WTC11 (cell line): ENCODE measurements at regions of chr5 and their contacts with region 1.

Region 1: DNA sequence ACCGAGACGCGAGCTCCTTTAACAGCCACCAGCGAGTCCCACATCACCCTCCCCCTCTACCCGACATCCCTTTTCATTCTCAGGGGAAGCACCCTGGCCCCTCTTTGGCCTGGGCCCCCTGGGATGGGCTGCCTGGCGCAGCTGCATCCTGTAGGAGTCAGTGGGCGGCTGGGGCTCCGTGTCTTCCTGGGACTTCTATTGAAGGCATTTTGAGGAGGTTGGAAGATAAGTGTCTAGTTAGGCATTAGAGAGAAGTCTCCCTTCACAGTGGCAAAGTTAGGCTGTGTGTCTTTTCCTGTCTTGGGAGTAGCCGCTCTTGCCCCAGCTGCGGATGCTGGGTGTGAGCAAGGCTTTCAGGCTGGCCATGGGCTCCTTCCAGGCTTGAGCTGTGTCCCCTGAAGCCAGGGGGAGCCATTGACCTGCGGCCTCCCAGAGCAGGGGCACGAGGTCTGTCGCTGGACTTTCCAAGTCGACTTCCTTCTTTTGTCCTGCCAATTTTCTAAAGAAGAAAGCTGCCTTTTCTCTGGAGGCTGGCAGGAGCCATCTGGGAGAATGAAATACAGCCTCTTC is 18.6 kb upstream of the NKD2 start:
- DNase-seq: peak; percentile 62
- ATAC-seq: peak; percentile 88
- H3K4me3 Mint-ChIP-seq: no peak overlapping the region
- H3K27ac Mint-ChIP-seq: no peak overlapping the region
- H3K4me1 Mint-ChIP-seq: peaks cover 5% of the 10 kb centered on the region
- H3K27me3 Mint-ChIP-seq: peaks cover 6% of the 10 kb centered on the region
- CTCF ChIP-seq: no peak

Region 2: DNA sequence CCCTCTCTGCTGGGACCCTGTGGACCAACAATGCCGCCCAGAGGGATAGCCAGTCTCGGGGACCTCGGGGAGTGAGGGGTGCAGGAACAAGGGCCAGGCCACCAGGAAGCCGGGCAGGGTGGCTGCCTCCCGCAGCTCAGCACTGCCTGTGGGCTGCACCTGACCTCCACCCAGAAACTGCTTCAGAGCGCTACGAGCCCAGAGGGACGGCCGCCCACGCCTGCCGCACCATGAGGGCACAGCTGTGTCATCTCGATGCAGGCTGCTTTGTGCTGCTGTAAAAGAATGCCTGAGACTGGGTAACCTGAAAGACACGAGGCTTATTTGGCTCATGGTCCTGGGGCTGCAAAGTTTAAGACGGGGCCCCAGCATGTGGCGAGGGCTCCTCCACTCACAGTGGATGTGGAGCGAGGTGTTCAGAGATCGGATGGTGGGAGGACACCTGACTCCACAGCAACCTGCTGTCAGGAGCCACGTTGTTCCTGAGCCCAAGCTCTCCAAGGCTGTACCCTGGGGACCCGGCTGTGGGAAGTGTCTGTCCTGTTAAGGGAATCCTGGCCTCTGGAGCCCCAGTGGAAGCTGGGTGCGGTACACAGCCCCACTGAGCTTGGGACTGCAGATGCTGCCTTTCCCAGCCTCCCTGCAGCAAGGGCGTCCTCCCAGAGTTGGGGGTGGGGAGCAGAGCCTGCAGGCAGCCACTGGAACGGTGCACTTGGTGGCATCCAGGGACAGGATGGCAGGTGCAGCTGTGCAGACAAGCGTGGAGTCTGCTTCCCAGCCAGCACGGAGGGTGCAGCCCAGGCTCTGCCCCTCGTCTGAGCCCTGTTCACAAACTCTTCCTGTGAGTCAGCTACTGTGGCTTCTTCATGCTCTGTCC is 127.4 kb before region 1 on chr5:
- CTCF ChIA-PET with region 1: no interaction called
- POLR2A ChIA-PET with region 1: no interaction called
- DNase-seq: no peak
- ATAC-seq: no peak
- H3K4me3 Mint-ChIP-seq: no peak overlapping the region
- H3K27ac Mint-ChIP-seq: no peak overlapping the region
- H3K4me1 Mint-ChIP-seq: no peaks in the 10 kb centered on the region
- H3K27me3 Mint-ChIP-seq: no peaks in the 10 kb centered on the region
- CTCF ChIP-seq: no peak

Region 3: DNA sequence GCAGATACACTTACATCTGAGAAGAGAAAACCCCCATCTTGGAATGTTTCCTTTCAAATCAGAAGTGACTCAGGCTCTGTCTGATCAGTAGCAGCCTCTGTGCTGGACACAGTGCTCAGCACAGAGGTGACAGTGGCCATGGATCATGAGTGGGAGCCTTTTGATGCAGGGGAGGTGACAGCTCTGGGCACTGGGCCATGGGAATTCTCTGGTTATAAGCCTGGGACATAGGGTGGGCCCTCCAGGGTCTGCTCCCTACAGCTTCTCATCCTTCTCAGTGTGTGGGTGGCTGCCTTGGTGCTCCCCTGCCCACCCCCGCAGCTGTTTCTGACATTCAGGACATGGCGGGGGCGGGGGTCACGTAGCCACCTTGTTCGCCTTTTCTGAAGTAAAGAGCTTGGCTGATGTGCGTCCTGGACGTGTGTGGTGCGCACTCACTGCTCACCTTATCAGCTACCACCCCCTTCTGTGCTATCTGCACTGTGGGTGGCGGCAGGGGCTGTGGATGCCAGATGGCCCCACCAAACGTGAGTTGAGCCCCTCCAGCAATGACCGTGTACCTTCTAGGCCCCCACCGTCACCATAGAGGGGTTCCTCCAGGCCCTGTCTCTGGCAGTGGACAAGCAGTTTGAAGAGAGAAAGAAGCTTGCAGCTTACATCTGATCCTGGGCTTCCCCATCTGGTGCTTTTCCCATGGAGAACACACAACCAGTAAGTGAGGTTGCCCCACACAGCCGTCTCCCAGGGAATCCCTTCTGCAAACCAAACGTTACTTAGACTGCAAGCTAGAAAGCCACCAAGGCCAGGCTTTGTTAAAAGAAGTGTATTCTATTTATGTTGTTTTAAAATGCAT is 73.4 kb before region 1 on chr5:
- CTCF ChIA-PET with region 1: no interaction called
- POLR2A ChIA-PET with region 1: no interaction called
- DNase-seq: no peak
- ATAC-seq: no peak
- H3K4me3 Mint-ChIP-seq: no peak overlapping the region
- H3K27ac Mint-ChIP-seq: no peak overlapping the region
- H3K4me1 Mint-ChIP-seq: no peaks in the 10 kb centered on the region
- H3K27me3 Mint-ChIP-seq: no peaks in the 10 kb centered on the region
- CTCF ChIP-seq: no peak

Region 4: DNA sequence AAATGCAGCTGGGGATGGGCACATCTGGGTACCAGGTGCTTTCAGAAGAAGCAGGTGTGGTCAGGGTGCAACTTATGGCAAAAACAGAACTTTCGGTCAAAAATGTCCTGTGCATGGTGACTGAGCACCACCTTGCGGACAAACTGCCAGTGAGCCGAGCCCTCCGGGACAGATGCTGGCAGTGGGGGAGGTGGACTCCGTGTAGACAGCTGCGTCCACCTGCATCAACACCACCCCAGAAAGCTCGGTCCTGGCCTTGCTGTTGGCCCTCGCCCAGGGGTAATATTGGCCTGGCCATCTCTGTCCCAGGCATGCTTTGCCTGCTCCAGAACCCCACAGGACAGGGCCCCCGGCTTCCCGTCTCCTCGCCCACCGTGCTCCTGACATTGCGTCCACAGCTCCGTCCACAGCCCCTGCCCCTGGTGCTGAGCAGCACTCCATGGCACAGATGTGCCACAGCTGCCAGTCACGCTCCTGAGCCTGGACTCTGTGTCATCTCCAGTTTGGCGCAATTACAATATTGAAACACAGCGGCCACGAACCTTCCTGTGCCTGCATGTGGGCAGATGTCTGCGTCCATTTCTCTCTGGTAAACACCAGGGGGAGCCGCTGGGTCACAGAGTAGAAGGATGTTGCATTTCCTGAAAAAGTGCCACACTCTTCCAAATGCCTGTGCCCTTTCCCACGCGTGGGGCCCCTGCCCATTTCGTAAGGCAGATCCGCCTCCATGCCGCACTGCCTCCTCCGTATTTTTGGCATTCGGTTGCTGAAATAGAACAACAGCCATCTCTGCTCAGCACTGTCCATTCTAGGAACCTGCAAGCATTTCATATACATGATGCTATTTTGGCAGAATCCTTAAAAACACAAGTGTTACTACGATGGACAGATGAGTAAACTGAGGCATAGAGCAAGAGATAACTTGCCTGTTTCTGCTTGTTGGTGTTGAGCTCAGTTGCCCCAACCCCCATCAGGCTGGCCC is 178.0 kb after region 1 on chr5:
- CTCF ChIA-PET with region 1: interaction called, 18 read pairs
- POLR2A ChIA-PET with region 1: no interaction called
- DNase-seq: peak; percentile 67
- ATAC-seq: peak; percentile 78
- H3K4me3 Mint-ChIP-seq: peak overlapping the region; percentile 72
- H3K27ac Mint-ChIP-seq: no peak overlapping the region
- H3K4me1 Mint-ChIP-seq: peaks cover 2% of the 10 kb centered on the region; the same call in 1 of the 2 replicates
- H3K27me3 Mint-ChIP-seq: no peaks in the 10 kb centered on the region
- CTCF ChIP-seq: peak; percentile 35

Region 5: GRCh38 chr5:1217596-1218206 is 227.7 kb after region 1 on chr5:
- CTCF ChIA-PET with region 1: no interaction called
- POLR2A ChIA-PET with region 1: no interaction called
- DNase-seq: no peak
- ATAC-seq: peak; percentile 66
- H3K4me3 Mint-ChIP-seq: no peak overlapping the region
- H3K27ac Mint-ChIP-seq: no peak overlapping the region
- H3K4me1 Mint-ChIP-seq: no peaks in the 10 kb centered on the region
- H3K27me3 Mint-ChIP-seq: no peaks in the 10 kb centered on the region; the same call in 1 of the 2 replicates
- CTCF ChIP-seq: no peak